CD4-positive, alpha-beta T cell (primary cell): ENCODE measurements at regions of chr13 and their contacts with region 1.

Region 1: DNA sequence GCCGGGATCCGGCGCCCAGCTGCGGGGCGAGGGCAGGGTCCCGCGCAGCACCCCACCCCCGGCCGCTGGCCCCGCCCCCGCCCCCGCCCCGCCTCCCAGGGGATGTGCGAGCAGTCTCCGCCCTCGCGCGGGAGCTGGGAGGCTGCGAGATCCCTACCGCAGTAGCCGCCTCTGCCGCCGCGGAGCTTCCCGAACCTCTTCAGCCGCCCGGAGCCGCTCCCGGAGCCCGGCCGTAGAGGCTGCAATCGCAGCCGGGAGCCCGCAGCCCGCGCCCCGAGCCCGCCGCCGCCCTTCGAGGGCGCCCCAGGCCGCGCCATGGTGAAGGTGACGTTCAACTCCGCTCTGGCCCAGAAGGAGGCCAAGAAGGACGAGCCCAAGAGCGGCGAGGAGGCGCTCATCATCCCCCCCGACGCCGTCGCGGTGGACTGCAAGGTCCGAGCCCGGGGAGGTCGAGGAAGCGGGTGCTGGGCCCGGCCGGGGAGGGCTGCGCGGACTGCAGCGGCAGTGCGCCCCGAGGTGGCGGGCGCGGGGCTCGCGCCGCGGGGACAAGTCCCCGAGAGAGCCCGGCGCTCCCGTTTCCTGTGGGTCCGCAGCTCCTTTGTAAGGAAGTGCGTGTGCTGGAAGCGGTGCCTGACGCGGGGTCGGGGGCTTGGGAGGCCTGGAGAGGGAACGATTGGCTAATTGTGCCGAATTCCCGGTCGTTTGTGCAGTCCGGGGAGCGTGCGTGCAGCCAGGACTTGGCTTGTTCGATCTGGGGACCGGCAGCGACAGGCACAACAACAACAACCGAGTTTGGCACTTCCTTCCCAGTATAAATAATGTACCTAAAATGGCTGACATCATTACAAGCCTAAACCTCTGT is at the start of gene ITM2B:
- DNase-seq: peak; percentile 44 to 86 (median 62)
- ATAC-seq: peak; percentile 70
- H3K4me3 ChIP-seq: peak within 1 kb of the TSS; percentile 93
- H3K4me3 Mint-ChIP-seq: peak within 1 kb of the TSS; percentile 98
- H3K27ac ChIP-seq: peak within 1 kb of the TSS; percentile 90 to 95
- H3K27ac Mint-ChIP-seq: peak within 1 kb of the TSS; percentile 97
- H3K4me1 ChIP-seq: peaks cover 22% of the 10 kb centered on the region
- H3K4me1 Mint-ChIP-seq: peaks cover 68% of the 10 kb centered on the region
- H3K27me3 ChIP-seq: no peaks in the 10 kb centered on the region
- H3K27me3 Mint-ChIP-seq: no peaks in the 10 kb centered on the region
- CTCF ChIP-seq: peak; percentile 68
- total RNA-seq, gene ITM2B: 305 to 323 TPM

Region 2: DNA sequence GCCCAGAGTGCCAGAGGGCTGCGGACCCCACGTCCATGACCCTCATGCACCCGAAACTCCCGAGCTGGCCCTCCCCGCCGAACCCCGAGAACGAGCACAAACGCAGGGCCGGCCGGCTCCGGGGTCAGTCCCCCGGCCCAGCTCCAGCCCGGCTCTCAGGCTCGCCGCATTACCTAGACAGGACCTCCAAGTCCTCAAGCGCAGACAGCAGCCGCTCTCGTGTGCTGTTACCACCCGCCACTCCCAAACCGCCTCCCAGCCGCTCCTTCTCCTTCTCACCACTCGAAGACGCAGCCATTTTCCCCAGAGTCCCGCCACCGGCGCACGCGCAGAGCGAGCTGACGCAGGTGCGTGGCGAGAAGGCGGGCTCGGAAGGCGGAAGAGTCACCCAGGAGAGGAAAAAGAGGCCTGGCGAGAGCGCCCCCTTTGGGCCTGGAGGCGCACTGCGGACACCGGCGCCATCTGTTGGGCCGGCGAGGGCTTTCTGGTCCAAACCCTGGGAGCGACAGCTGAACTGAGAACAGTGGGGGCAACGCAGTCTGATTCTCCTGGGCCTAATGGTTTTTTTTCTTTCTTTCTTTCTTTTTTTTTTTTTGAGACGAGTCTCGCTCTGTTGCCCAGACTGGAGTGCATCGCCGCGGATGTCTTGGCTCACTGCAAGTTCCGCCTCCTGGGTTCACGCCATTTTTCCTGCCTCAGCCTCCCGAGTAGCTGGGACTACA is 138.3 kb before region 1 on chr13 and contains the start of gene MED4:
- CTCF ChIA-PET with region 1: interaction called, 12 read pairs
- POLR2A ChIA-PET with region 1: interaction called, 16 read pairs
- intact Hi-C with region 1: loop called in 1 of 2 experiments (anchors 1 kb)
- DNase-seq: peak; percentile 95 to 99 (median 97)
- ATAC-seq: peak; percentile 98
- H3K4me3 ChIP-seq: peak within 1 kb of the TSS; percentile 85
- H3K4me3 Mint-ChIP-seq: peak within 1 kb of the TSS; percentile 100
- H3K27ac ChIP-seq: peak within 1 kb of the TSS; percentile 84 to 89
- H3K27ac Mint-ChIP-seq: peak within 1 kb of the TSS; percentile 95
- H3K4me1 ChIP-seq: peaks cover 23% of the 10 kb centered on the region
- H3K4me1 Mint-ChIP-seq: peaks cover 53% of the 10 kb centered on the region
- H3K27me3 ChIP-seq: no peaks in the 10 kb centered on the region
- H3K27me3 Mint-ChIP-seq: no peaks in the 10 kb centered on the region
- CTCF ChIP-seq: peak; percentile 99
- total RNA-seq, gene MED4: 48.9 to 56.1 TPM

Region 3: GRCh38 chr13:48155848-48156247 is 77.4 kb before region 1 on chr13:
- CTCF ChIA-PET with region 1: interaction called, 6 read pairs
- POLR2A ChIA-PET with region 1: interaction called, 78 read pairs
- intact Hi-C with region 1: loop called (anchors 1 kb)
- DNase-seq: peak in 9 of 14 experiments; percentile 7 to 92 (median 39)
- ATAC-seq: peak; percentile 88
- H3K4me3 ChIP-seq: peak overlapping the region; percentile 36
- H3K4me3 Mint-ChIP-seq: peak overlapping the region; percentile 62
- H3K27ac ChIP-seq: peak overlapping the region; percentile 76 to 88
- H3K27ac Mint-ChIP-seq: peak overlapping the region; percentile 93
- H3K4me1 ChIP-seq: peaks cover 72% of the 10 kb centered on the region
- H3K4me1 Mint-ChIP-seq: peaks cover 86% of the 10 kb centered on the region
- H3K27me3 ChIP-seq: no peaks in the 10 kb centered on the region
- H3K27me3 Mint-ChIP-seq: no peaks in the 10 kb centered on the region
- CTCF ChIP-seq: no peak

Region 4: GRCh38 chr13:48192411-48192935 is 40.8 kb before region 1 on chr13:
- CTCF ChIA-PET with region 1: no interaction called
- POLR2A ChIA-PET with region 1: interaction called, 87 read pairs
- intact Hi-C with region 1: loop called in 1 of 2 experiments (anchors 2 kb)
- DNase-seq: no peak
- ATAC-seq: no peak
- H3K4me3 ChIP-seq: no peak overlapping the region
- H3K4me3 Mint-ChIP-seq: no peak overlapping the region
- H3K27ac ChIP-seq: no peak overlapping the region
- H3K27ac Mint-ChIP-seq: no peak overlapping the region
- H3K4me1 ChIP-seq: peaks cover 25% of the 10 kb centered on the region
- H3K4me1 Mint-ChIP-seq: peaks cover 60% of the 10 kb centered on the region
- H3K27me3 ChIP-seq: no peaks in the 10 kb centered on the region
- H3K27me3 Mint-ChIP-seq: no peaks in the 10 kb centered on the region
- CTCF ChIP-seq: no peak

Region 5: GRCh38 chr13:48222358-48223301 is 10.6 kb before region 1 on chr13:
- CTCF ChIA-PET with region 1: interaction called, 5 read pairs
- POLR2A ChIA-PET with region 1: interaction called, 157 read pairs
- intact Hi-C with region 1: loop called in 1 of 2 experiments (anchors 1 kb)
- DNase-seq: peak in 3 of 14 experiments; percentile 33 to 40 (median 37)
- ATAC-seq: peak; percentile 34
- H3K4me3 ChIP-seq: peak overlapping the region; percentile 23
- H3K4me3 Mint-ChIP-seq: peak overlapping the region; percentile 81
- H3K27ac ChIP-seq: peak overlapping the region; percentile 70 to 90
- H3K27ac Mint-ChIP-seq: peak overlapping the region; percentile 97
- H3K4me1 ChIP-seq: peaks cover 43% of the 10 kb centered on the region
- H3K4me1 Mint-ChIP-seq: peaks cover 67% of the 10 kb centered on the region
- H3K27me3 ChIP-seq: no peaks in the 10 kb centered on the region
- H3K27me3 Mint-ChIP-seq: no peaks in the 10 kb centered on the region
- CTCF ChIP-seq: no peak

Region 6: GRCh38 chr13:48580185-48580803 is 347.0 kb after region 1 on chr13:
- CTCF ChIA-PET with region 1: no interaction called
- POLR2A ChIA-PET with region 1: interaction called, 5 read pairs
- intact Hi-C with region 1: loop called in 1 of 2 experiments (anchors 10 kb)
- DNase-seq: peak; percentile 54 to 87 (median 72)
- ATAC-seq: peak; percentile 73
- H3K4me3 ChIP-seq: no peak overlapping the region
- H3K4me3 Mint-ChIP-seq: no peak overlapping the region
- H3K27ac ChIP-seq: no peak overlapping the region
- H3K27ac Mint-ChIP-seq: no peak overlapping the region
- H3K4me1 ChIP-seq: peaks cover 7% of the 10 kb centered on the region
- H3K4me1 Mint-ChIP-seq: peaks cover 9% of the 10 kb centered on the region
- H3K27me3 ChIP-seq: peaks cover 0 to 8% of the 10 kb centered on the region in 2 experiments
- H3K27me3 Mint-ChIP-seq: peaks cover 6% of the 10 kb centered on the region
- CTCF ChIP-seq: peak; percentile 91